MCF 10A (cell line): ENCODE measurements at regions of chr1 and their contacts with region 1.

Region 1: DNA sequence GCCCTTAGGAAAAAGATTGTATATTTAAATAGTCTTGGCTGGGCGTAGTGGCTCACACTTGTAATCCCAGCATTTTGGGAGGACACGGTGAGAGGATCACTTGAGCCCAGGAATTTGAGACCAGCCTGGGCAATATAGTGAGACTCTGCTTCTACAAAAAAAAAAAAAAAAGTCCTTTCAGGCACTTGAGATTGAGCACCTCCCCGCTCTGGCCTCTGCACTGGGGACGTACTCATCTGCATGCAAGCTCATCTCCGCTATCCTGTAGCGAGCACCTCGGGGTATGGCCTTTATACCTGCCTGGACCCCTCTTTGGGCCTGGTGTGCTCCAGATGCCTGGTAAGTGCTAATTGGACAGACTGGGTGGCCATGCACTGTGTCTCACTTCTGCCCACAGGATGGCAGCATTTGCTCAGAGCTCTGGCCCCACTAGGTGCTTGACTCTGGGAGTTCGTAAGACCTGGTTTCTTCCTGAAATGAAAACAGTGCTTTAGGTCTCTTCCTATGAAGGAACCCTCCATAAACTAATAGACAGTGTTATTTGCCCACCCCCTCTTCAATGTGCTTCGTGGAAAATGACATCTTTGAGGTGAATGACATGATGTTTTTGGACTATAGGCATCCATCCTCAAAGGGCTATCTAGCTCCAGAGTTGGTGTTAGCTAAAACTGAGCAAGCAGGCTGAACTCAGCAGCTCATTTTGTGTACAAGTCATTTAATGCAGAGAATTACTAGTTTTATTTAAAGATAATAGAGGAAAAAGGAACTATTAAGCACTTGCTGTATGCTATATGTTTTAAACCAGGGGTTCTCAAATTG is 61.7 kb upstream of the ADAR start:
- DNase-seq: peak; percentile 88
- H3K4me3 Mint-ChIP-seq: no peak overlapping the region
- H3K27ac Mint-ChIP-seq: no peak overlapping the region
- H3K4me1 Mint-ChIP-seq: no peaks in the 10 kb centered on the region
- H3K27me3 Mint-ChIP-seq: peaks cover 19% of the 10 kb centered on the region
- CTCF ChIP-seq: peak; percentile 96

Region 2: GRCh38 chr1:154479764-154480421 is 189.8 kb before region 1 on chr1:
- CTCF ChIA-PET with region 1: interaction called, 10 read pairs
- POLR2A ChIA-PET with region 1: no interaction called
- intact Hi-C with region 1: loop called (anchors 2 kb)
- DNase-seq: peak; percentile 92
- H3K4me3 Mint-ChIP-seq: no peak overlapping the region
- H3K27ac Mint-ChIP-seq: no peak overlapping the region
- H3K4me1 Mint-ChIP-seq: peaks cover 23% of the 10 kb centered on the region
- H3K27me3 Mint-ChIP-seq: no peaks in the 10 kb centered on the region
- CTCF ChIP-seq: peak; percentile 98

Region 3: GRCh38 chr1:154819628-154820590 is 150.2 kb after region 1 on chr1:
- CTCF ChIA-PET with region 1: interaction called, 10 read pairs
- POLR2A ChIA-PET with region 1: no interaction called
- intact Hi-C with region 1: no loop called
- DNase-seq: peak; percentile 49
- H3K4me3 Mint-ChIP-seq: no peak overlapping the region
- H3K27ac Mint-ChIP-seq: no peak overlapping the region
- H3K4me1 Mint-ChIP-seq: peaks cover 6% of the 10 kb centered on the region
- H3K27me3 Mint-ChIP-seq: no peaks in the 10 kb centered on the region
- CTCF ChIP-seq: peak; percentile 76

Region 4: DNA sequence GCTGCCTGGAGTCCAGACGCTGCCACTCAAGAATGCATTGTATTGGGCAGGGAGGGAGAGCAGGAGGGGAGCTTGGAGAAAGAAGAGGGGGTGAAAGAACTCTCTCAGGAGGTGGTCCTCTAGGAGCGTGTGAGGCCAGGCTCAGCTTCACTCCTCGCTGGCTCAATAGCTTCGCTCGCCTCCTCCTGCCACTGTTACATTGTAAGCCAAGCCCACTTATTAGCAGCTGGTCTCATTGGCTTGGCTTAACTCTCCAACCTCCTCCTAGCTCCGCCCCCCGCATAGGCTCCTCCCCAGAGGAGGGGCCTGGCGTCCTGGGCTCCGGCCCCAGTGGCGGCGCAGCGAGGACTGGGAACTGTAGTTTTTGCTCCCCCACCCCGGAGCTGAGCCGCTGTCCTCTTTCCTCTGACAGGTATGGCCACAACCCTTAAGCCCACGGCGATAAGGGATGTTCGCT is 200.5 kb after region 1 on chr1 and contains the start of gene KCNN3:
- CTCF ChIA-PET with region 1: interaction called, 113 read pairs
- POLR2A ChIA-PET with region 1: interaction called, 5 read pairs
- intact Hi-C with region 1: no loop called
- DNase-seq: peak; percentile 85
- H3K4me3 Mint-ChIP-seq: no peak within 1 kb of the TSS
- H3K27ac Mint-ChIP-seq: no peak within 1 kb of the TSS
- H3K4me1 Mint-ChIP-seq: peaks cover 12% of the 10 kb centered on the region
- H3K27me3 Mint-ChIP-seq: peaks cover 56% of the 10 kb centered on the region
- CTCF ChIP-seq: no peak
- total RNA-seq, gene KCNN3: 0.07 TPM in 1 of 2 replicates, not detected in the other

Region 5: GRCh38 chr1:154936555-154937084 is 266.9 kb after region 1 on chr1 and contains the start of gene PMVK:
- CTCF ChIA-PET with region 1: interaction called, 8 read pairs
- POLR2A ChIA-PET with region 1: interaction called, 11 read pairs
- intact Hi-C with region 1: no loop called
- DNase-seq: peak; percentile 99
- H3K4me3 Mint-ChIP-seq: peak within 1 kb of the TSS; percentile 90
- H3K27ac Mint-ChIP-seq: peak within 1 kb of the TSS; percentile 100
- H3K4me1 Mint-ChIP-seq: peaks cover 49% of the 10 kb centered on the region
- H3K27me3 Mint-ChIP-seq: no peaks in the 10 kb centered on the region
- CTCF ChIP-seq: peak; percentile 26
- total RNA-seq, gene PMVK: 57.7 and 68.9 TPM in 2 replicates

Region 6: DNA sequence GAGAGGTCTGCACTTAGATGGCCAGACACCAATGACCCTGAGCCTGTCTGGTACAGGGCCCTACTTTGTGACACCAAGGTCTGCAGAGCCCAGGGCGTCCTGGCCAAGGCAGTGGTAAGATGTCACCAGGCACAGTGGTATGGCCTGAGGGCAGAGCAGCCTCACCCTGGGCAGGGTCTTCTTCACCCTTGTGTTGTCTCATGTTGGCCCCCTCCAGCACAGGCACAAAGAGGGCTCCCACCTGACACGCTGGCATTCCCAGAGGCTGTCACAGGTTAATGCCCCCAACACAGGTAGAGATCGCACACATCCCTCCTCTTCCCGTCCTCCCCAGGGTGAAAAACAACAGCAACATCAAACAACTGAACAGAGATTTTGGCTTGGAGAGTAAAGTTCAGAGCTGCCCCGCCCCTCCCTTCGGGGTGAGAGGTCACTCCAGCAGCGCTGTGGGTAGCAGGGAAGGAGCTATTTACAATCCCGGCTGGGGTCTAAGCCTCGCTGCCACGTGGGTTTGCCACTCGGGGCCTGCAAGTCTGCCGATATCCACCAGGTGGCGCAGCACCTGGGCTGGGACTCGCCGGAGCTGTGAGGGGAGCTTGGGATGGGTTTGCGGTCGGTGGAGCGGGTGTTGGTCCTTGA is 421.5 kb after region 1 on chr1:
- CTCF ChIA-PET with region 1: interaction called, 10 read pairs
- POLR2A ChIA-PET with region 1: no interaction called
- intact Hi-C with region 1: no loop called
- DNase-seq: peak; percentile 83
- H3K4me3 Mint-ChIP-seq: no peak overlapping the region
- H3K27ac Mint-ChIP-seq: no peak overlapping the region
- H3K4me1 Mint-ChIP-seq: peaks cover 26% of the 10 kb centered on the region
- H3K27me3 Mint-ChIP-seq: peaks cover 16% of the 10 kb centered on the region
- CTCF ChIP-seq: peak; percentile 100